Activated naive CD4-positive, alpha-beta T cell treated with anti-CD3 and anti-CD28 coated beads, Interleukin-2, amount 10 ng/mL, durations not matched to agents 7 days and 5 days (primary cell): ENCODE measurements at regions of chr12 and their contacts with region 1.

Region 1: DNA sequence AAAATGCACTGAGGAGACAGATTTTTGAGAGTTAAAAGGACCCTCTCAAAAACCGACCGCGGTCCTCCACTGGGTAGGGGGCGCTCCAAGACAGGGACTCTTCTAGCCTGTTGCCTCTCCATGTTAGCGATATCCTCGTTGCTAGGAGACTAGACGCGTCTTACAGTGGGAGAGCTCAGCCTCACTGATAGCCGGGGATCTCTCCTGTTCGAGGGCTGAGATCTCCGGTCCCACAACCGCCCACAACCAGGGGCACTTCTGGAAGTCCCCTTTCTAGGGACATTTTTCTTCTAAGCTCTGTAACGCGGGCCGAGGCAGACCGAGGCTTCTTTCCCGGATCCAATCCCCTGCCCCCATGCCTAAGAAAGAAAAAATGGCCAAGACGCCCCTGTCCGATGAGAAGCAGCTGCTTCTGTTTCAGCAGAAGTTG is 21.3 kb downstream of the FKBP11 start:
- DNase-seq: peak; percentile 91
- H3K4me3 Mint-ChIP-seq: peak overlapping the region; percentile 61
- H3K27ac Mint-ChIP-seq: no peak overlapping the region
- H3K4me1 Mint-ChIP-seq: peaks cover 11% of the 10 kb centered on the region
- H3K27me3 Mint-ChIP-seq: peaks cover 43% of the 10 kb centered on the region

Region 2: DNA sequence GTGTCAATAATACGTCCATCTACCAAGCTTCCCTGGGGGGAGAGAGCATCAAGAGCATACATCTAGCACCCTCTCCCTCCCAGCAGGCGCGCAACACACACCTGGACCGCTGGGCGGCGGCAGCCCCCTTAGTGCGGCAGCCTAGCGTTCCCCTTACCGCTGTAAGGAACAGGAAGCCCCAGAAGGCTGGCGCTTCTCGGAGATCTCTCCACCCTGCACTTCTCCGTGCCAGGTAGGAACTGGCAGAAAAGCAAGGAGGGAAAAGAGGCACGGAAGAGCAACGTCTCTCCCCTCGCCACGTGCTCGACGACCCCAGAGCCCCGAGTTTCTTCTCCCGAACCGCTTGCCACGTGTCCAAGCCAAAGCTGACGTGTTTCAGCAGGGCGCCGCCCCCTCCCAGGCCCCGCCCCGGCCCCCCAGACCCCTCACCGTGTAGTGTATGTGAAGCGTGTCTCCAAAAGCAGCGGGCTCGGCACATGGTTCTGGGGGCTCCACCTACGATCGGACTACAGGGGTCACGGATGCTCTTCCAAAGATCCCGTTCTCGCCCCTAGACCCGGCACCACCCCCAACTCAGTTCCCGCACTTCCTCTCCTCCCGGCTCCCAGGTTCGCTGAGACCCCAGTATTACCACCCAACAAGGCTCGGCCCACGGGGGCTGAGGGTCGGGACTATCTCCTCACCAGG is 20.8 kb after region 1 on chr12:
- CTCF ChIA-PET with region 1: interaction called, 22 read pairs
- DNase-seq: peak; percentile 80
- H3K4me3 Mint-ChIP-seq: peak overlapping the region; percentile 92
- H3K27ac Mint-ChIP-seq: peak overlapping the region; percentile 90
- H3K4me1 Mint-ChIP-seq: peaks cover 31% of the 10 kb centered on the region
- H3K27me3 Mint-ChIP-seq: peaks cover 4% of the 10 kb centered on the region

Region 3: DNA sequence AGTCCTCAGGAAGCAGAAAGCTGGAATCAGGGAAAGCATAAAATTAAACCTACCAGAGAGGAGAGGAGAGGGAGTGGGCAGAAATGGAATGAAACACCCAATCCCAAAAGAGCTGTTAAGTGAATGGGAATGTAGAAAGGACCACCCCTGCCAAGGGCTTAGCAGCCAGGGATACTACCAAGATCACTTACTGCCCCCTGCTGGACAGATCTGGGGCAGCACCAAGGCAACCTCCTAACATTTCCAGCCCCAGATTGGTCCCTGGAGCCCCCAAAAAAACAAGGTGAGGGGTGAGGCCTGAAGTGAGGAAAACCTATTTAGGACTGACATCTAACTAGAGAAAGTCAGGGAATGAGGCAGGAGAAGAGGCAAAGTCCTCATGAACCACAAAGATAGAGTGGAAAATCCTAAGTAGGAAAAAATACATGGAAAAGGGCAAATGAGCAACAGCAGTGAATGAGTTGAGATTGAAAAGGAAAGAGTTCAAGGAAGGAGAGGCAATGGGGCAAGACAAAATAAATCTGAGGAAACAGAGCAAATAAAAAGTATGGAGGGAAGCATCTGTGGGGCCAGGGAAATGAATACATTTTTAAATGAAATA is 32.5 kb after region 1 on chr12:
- CTCF ChIA-PET with region 1: interaction called, 22 read pairs
- DNase-seq: peak; percentile 88
- H3K4me3 Mint-ChIP-seq: no peak overlapping the region
- H3K27ac Mint-ChIP-seq: no peak overlapping the region
- H3K4me1 Mint-ChIP-seq: peaks cover 11% of the 10 kb centered on the region
- H3K27me3 Mint-ChIP-seq: no peaks in the 10 kb centered on the region

Region 4: GRCh38 chr12:49018261-49019119 is 114.5 kb after region 1 on chr12 and contains the start of gene PRKAG1:
- CTCF ChIA-PET with region 1: no interaction called
- DNase-seq: peak; percentile 98
- H3K4me3 Mint-ChIP-seq: peak within 1 kb of the TSS; percentile 95
- H3K27ac Mint-ChIP-seq: peak within 1 kb of the TSS; percentile 99
- H3K4me1 Mint-ChIP-seq: peaks cover 41% of the 10 kb centered on the region
- H3K27me3 Mint-ChIP-seq: no peaks in the 10 kb centered on the region

Region 5: DNA sequence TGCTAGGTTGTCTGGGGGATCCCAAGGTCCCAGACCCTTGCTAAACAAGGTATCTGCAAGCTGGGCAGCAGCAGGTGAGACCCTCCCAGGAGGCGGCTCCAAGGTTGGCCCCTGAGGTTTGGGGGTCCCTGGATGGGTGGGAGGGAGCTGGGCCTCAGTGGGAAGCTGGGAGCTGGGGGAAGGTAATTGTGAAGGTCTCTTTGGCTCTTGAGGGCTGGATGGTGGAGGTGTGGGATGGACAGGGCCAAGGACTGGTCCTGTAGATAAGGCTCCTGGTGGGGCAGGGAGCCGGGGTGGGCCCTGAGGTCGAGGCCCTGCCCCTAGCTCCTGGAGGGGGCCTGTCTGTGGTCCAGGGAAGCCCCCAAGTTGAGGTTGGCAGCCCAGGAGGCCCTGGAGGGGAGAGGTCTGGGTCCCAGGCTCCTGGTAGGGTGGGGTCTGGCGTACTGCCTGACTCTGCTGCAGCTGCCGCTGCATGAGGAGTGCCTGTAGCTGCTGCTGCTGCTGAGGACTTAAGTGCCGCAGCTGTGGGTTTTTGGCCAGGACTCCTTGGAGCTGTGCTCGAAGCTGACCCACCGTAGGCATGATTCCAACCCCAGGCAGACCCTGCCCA is 127.7 kb after region 1 on chr12:
- CTCF ChIA-PET with region 1: no interaction called
- DNase-seq: no peak
- H3K4me3 Mint-ChIP-seq: no peak overlapping the region
- H3K27ac Mint-ChIP-seq: no peak overlapping the region
- H3K4me1 Mint-ChIP-seq: peaks cover 4% of the 10 kb centered on the region
- H3K27me3 Mint-ChIP-seq: no peaks in the 10 kb centered on the region